ENCODE measurements at regions of chr20 and their contacts with region 1.

Region 1: DNA sequence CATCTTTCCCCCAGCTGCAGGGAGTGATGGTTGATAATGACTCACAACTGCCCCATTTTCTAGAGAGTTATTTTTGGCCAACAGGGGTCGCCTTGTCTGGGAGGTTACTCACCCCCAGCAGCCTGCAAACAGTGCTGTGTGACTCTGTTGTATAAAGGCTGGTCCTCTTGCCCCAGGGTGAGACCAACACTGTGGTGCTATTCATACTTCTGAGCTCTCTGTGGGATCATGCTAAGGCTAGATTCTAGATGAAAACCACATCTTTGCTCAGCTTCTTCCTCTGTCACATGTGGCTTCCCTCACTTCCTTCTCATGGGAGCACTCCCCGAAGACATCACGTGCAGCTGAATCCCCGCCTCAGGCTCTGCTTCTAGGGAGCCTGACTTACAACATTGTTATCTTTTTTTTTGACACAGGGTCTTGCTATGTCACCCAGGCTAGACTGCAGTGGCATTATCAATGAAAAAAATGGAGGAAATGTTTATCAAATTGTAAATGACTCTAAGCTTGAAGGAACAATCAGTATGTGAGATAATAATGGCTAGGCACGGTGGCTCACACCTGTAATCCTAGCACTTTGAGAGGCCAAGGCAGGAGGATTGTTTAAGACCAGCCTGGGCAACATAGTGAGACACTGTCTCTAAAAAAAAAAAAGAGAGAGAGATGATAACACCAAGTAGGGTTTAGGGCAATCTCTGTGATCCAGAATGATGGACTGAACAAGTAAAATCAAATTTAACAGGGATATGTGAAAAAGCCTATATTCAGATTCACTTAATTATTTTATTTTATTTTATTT is 55.7 kb upstream of the SLC23A2 start:
- DNase-seq: peak; percentile 61
- ATAC-seq: peak; percentile 100
- H3K4me3 Mint-ChIP-seq: peak overlapping the region; percentile 39
- H3K27ac Mint-ChIP-seq: peak overlapping the region; percentile 75
- H3K4me1 Mint-ChIP-seq: peaks cover 22% of the 10 kb centered on the region
- H3K27me3 Mint-ChIP-seq: peaks cover 14% of the 10 kb centered on the region

Region 2: DNA sequence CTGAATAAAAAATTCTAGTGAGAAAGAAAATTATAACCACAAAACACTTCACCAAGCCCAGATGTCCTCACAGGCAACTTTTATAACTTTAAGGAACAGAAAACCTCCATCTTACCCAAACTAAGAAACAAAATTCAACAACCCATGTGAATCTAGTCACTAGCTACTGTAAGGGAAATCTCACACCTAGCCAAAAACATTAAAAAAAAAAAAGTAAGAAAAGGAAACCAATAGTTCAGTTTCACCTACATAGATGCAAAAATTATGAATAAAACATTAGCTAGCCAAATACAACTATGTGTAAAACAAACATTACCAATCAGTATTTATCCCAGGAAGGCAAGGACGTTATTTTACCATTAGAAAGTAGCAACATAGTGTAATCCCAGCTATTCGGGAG is 20.2 kb before region 1 on chr20:
- POLR2A ChIA-PET with region 1: no interaction called
- DNase-seq: no peak
- ATAC-seq: no peak
- H3K4me3 Mint-ChIP-seq: no peak overlapping the region
- H3K27ac Mint-ChIP-seq: no peak overlapping the region
- H3K4me1 Mint-ChIP-seq: peaks cover 11% of the 10 kb centered on the region
- H3K27me3 Mint-ChIP-seq: peaks cover 17% of the 10 kb centered on the region

Region 3: DNA sequence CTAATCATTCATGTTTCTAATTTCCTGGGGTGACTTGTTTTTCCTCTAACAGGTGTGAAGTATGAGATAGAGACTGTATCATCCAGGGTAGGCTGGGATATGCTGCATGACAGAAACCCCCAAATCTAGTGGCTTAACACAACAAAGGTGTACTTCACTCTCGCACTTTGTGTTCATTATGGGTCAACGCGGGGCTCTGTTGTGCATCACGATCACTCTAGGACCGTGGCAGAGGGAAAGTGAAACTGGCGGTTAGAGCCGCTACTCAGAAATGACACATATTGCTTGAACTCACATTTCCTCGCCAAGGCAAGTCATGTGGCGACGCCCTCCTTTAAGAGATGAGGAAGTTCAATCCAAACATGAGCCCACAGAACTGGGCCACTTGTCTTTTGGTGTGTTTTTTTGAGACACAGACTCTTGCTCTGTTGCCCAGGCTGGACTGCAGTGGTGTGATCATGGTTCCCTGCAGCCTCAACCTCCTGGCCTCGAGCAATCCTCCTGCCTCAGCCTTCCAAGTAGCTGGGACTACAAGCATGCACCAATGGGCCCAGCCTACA is 21.5 kb after region 1 on chr20:
- POLR2A ChIA-PET with region 1: interaction called, 12 read pairs
- DNase-seq: peak; percentile 68
- ATAC-seq: peak; percentile 98
- H3K4me3 Mint-ChIP-seq: peak overlapping the region; percentile 74
- H3K27ac Mint-ChIP-seq: peak overlapping the region; percentile 98
- H3K4me1 Mint-ChIP-seq: peaks cover 46% of the 10 kb centered on the region
- H3K27me3 Mint-ChIP-seq: no peaks in the 10 kb centered on the region

Region 4: GRCh38 chr20:5090191-5090590 is 33.2 kb after region 1 on chr20:
- POLR2A ChIA-PET with region 1: no interaction called
- DNase-seq: peak; percentile 11
- ATAC-seq: peak; percentile 82
- H3K4me3 Mint-ChIP-seq: peak overlapping the region; percentile 26
- H3K27ac Mint-ChIP-seq: peak overlapping the region; percentile 77
- H3K4me1 Mint-ChIP-seq: peaks cover 13% of the 10 kb centered on the region
- H3K27me3 Mint-ChIP-seq: no peaks in the 10 kb centered on the region

Measured in activated naive CD8-positive, alpha-beta T cell treated with anti-CD3 and anti-CD28 coated beads, Interleukin-2, amount 10 ng/mL, durations not matched to agents 7 days and 5 days (primary cell).